ENCODE measurements at regions of chr17 and their contacts with region 1.

Region 1: DNA sequence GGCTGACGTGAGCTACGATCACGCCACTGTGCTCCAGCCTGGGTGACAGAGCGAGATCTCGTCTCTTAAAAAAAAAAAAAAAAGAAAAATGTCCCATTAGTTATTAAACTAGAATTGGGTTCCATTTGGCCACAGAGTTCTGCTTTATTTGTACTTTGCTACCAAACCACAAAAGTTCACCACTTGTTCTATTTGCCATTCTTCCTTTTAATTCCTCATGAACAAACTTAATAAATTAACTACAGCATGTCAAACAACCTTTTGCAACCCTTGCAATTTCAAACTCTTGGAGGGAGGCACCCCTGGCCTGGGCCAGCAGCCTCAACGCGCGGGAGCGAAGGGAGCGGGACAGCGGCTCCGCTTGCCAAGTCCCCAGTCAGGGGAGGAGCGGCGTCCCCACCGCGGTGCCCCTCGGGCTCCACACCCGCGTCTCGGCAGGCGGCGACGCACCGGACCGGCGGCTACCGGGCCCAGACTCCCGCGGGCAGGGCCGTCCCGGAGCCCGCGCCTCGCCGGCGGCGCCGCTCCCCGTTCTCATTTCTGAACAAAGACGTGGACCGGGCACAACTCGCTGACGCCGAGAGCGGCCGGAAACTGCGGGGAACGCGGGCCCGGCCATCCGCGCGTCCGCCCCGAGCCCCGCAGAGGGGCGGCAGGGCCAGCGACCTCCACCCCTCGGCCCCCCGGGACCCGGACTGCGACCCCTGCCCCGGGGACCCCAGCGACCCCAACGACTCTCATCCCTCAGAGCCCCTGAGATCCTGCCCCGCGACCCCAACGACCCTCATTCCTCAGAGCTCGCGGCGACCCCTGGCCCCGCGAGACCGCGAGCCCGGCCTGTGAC is 747 bp downstream of the CYTH1 start:
- DNase-seq: peak; percentile 50
- ATAC-seq: peak; percentile 7
- H3K4me3 Mint-ChIP-seq: peak overlapping the region; percentile 79
- H3K27ac Mint-ChIP-seq: peak overlapping the region; percentile 99
- H3K4me1 Mint-ChIP-seq: peaks cover 44% of the 10 kb centered on the region
- H3K27me3 Mint-ChIP-seq: no peaks in the 10 kb centered on the region
- CTCF ChIP-seq: no peak

Region 2: DNA sequence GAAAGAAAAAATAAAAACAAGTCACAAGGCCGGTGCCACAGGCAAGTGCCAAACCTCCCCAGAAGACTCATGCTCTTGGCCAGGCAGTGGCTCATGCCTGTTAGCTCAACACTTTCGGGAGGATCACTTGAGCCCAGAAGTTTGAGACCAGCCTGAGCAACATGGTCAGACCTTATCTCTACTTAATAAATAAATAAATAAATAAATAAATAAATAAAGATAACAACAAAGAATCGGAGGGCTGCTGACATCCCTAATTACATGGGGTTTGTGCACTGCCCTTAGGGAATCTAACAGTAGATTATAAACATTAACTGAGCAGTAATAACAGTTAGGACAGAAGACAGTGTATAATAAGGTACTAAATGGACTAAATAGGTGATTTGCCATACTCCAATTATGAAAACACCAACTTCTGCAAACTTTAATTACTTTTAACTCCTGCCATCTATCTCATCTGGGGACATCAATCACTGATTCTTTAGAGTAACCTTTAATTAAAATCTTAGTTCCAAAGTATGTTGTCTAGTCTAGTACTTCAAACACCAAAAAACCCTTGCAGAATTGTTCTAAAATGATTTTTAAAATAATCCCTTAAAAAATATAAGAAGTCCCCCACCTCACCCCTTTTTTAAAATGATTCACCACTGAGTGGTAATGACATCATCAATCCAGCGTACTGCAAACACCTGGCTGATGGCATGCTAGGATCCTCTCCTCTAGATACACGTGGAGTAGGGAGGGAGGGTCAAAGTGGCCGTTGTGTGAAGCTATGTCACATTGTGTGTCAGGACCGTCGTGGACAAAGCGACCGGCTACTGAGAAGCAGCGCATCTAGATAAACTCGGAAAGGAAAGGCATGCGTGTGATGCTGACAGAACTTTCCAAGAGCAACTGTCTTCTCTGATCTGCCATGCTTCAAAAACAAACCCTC is 27.7 kb before region 1 on chr17:
- CTCF ChIA-PET with region 1: interaction called, 7 read pairs
- POLR2A ChIA-PET with region 1: interaction called, 13 read pairs
- intact Hi-C with region 1: loop called (anchors 2 kb)
- DNase-seq: peak; percentile 56
- ATAC-seq: peak; percentile 33
- H3K4me3 Mint-ChIP-seq: peak overlapping the region; percentile 52
- H3K27ac Mint-ChIP-seq: peak overlapping the region; percentile 94
- H3K4me1 Mint-ChIP-seq: peaks cover 83% of the 10 kb centered on the region
- H3K27me3 Mint-ChIP-seq: no peaks in the 10 kb centered on the region
- CTCF ChIP-seq: no peak

Region 3: GRCh38 chr17:78769196-78769773 is 12.0 kb before region 1 on chr17:
- CTCF ChIA-PET with region 1: interaction called, 4 read pairs
- POLR2A ChIA-PET with region 1: interaction called, 12 read pairs
- intact Hi-C with region 1: no loop called
- DNase-seq: peak; percentile 58
- ATAC-seq: peak; percentile 37
- H3K4me3 Mint-ChIP-seq: no peak overlapping the region
- H3K27ac Mint-ChIP-seq: no peak overlapping the region
- H3K4me1 Mint-ChIP-seq: peaks cover 41% of the 10 kb centered on the region
- H3K27me3 Mint-ChIP-seq: no peaks in the 10 kb centered on the region
- CTCF ChIP-seq: peak; percentile 51

Region 4: GRCh38 chr17:78798695-78799559 is 17.6 kb after region 1 on chr17:
- CTCF ChIA-PET with region 1: no interaction called
- POLR2A ChIA-PET with region 1: interaction called, 12 read pairs
- intact Hi-C with region 1: no loop called
- DNase-seq: peak; percentile 33
- ATAC-seq: peak; percentile 52
- H3K4me3 Mint-ChIP-seq: no peak overlapping the region
- H3K27ac Mint-ChIP-seq: peak overlapping the region; percentile 80
- H3K4me1 Mint-ChIP-seq: peaks cover 36% of the 10 kb centered on the region
- H3K27me3 Mint-ChIP-seq: no peaks in the 10 kb centered on the region
- CTCF ChIP-seq: peak; percentile 33

Region 5: GRCh38 chr17:78879635-78880186 is 98.4 kb after region 1 on chr17:
- CTCF ChIA-PET with region 1: no interaction called
- POLR2A ChIA-PET with region 1: no interaction called
- intact Hi-C with region 1: no loop called
- DNase-seq: peak; percentile 56
- ATAC-seq: peak; percentile 67
- H3K4me3 Mint-ChIP-seq: peak overlapping the region; percentile 43
- H3K27ac Mint-ChIP-seq: peak overlapping the region; percentile 57
- H3K4me1 Mint-ChIP-seq: peaks cover 25% of the 10 kb centered on the region
- H3K27me3 Mint-ChIP-seq: peaks cover 2% of the 10 kb centered on the region
- CTCF ChIP-seq: no peak